ENCODE measurements at regions of chr3 and their contacts with region 1.

Region 1: GRCh38 chr3:57852896-57853295 is 96.8 kb downstream of the SLMAP start:
- DNase-seq: no peak
- ATAC-seq: no peak
- H3K4me3 ChIP-seq: no peak overlapping the region
- H3K27ac ChIP-seq: no peak overlapping the region
- H3K4me1 ChIP-seq: no peaks in the 10 kb centered on the region
- H3K27me3 ChIP-seq: no peaks in the 10 kb centered on the region
- CTCF ChIP-seq: peak in 4 of 9 donors; percentile 28 to 44 (median 32)

Region 2: GRCh38 chr3:57397175-57398026 is 455.5 kb before region 1 on chr3:
- intact Hi-C with region 1: loop called in 2 of 10 experiments (anchors 5 to 10 kb)
- DNase-seq: peak; percentile 7 to 9
- ATAC-seq: peak in 5 of 8 donors; percentile 34 to 85 (median 60)
- H3K4me3 ChIP-seq: no peak overlapping the region
- H3K27ac ChIP-seq: no peak overlapping the region
- H3K4me1 ChIP-seq: peaks cover 0 to 2% (median 0%) of the 10 kb centered on the region in 9 donors
- H3K27me3 ChIP-seq: peaks cover 0 to 19% (median 0%) of the 10 kb centered on the region in 7 donors
- CTCF ChIP-seq: peak; percentile 45 to 81 (median 76)

Region 3: GRCh38 chr3:57659806-57660439 is 193.0 kb before region 1 on chr3:
- intact Hi-C with region 1: loop called in 1 of 10 experiments (anchors 10 kb)
- DNase-seq: no peak
- ATAC-seq: no peak
- H3K4me3 ChIP-seq: no peak overlapping the region
- H3K27ac ChIP-seq: peak overlapping the region in 4 of 10 donors; percentile 45 to 69 (median 62)
- H3K4me1 ChIP-seq: peaks cover 0 to 24% (median 14%) of the 10 kb centered on the region in 9 donors
- H3K27me3 ChIP-seq: no peaks in the 10 kb centered on the region
- CTCF ChIP-seq: no peak

Region 4: DNA sequence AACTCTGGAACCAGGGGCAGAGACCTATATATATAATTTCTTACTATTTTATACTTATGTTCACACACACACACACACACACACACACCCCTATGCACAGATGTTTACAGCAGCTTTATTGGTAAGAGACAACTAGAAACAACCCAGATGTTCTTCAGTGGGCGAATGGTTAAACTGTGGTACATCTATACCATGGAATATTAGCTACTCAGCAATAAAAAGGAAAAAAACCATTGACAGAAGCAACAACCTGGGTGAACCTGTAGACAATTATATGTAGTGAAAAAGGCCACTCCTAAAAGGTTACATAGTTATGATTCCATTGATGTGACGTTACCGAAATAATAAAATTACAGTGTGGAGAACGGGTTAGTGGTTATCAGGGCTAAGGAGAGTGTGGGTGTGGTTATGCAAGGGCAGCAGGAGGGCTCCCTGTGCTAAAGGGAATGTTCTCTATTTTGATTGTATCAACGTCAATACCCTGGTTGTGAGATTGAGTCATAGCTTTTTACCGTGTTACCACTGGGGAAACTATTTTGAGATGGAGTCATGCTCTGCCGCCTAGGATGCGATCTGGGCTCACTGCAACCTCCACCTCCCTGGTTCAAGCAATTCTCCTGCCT is 240.8 kb after region 1 on chr3:
- intact Hi-C with region 1: no loop called
- DNase-seq: no peak
- ATAC-seq: peak in 3 of 8 donors; percentile 25 to 48 (median 41)
- H3K4me3 ChIP-seq: no peak overlapping the region
- H3K27ac ChIP-seq: peak overlapping the region in 1 of 10 donors; percentile 11
- H3K4me1 ChIP-seq: peaks cover 0 to 14% (median 0%) of the 10 kb centered on the region in 9 donors
- H3K27me3 ChIP-seq: no peaks in the 10 kb centered on the region
- CTCF ChIP-seq: no peak